ENCODE measurements at regions of chr10 and their contacts with region 1.

Region 1: GRCh38 chr10:21495752-21496342 is 29.6 kb downstream of the SKIDA1 start:
- DNase-seq: peak; percentile 86 to 95 (median 90)
- H3K4me3 ChIP-seq: peak overlapping the region; percentile 66
- H3K27ac ChIP-seq: peak overlapping the region; percentile 15 to 70
- H3K4me1 ChIP-seq: no peaks in the 10 kb centered on the region
- H3K27me3 ChIP-seq: no peaks in the 10 kb centered on the region
- CTCF ChIP-seq: peak; percentile 96 to 98 (median 96)
- EP300 ChIP-seq: no peak
- POLR2A ChIP-seq: peak; percentile 27

Region 2: DNA sequence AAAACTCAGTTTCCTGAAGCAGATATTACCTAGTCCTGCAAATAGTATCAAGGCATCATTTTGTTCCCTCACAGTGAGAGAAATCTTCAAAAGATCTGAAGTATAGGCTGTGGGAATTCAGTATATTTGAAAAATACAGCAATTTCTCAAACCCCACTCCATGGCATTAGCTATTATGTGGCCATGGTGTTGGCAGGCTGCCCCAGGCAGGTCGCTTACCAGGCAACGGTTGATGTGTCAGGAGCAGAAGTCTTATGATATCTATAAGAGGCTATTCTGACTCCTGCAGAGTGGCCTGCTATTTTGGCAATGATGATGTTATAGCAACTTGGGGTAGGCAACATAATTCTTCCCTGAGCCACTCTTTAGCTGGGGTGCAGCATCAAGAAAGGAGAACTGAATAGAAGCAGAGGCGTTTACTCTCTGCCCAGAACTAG is 1491.7 kb before region 1 on chr10:
- intact Hi-C with region 1: loop called in 1 of 4 experiments (anchors 10 kb)
- DNase-seq: peak in 3 of 5 donors; percentile 26 to 44 (median 27)
- H3K4me3 ChIP-seq: no peak overlapping the region
- H3K27ac ChIP-seq: no peak overlapping the region
- H3K4me1 ChIP-seq: peaks cover 16% of the 10 kb centered on the region
- H3K27me3 ChIP-seq: no peaks in the 10 kb centered on the region
- CTCF ChIP-seq: no peak
- EP300 ChIP-seq: no peak
- POLR2A ChIP-seq: no peak

Region 3: DNA sequence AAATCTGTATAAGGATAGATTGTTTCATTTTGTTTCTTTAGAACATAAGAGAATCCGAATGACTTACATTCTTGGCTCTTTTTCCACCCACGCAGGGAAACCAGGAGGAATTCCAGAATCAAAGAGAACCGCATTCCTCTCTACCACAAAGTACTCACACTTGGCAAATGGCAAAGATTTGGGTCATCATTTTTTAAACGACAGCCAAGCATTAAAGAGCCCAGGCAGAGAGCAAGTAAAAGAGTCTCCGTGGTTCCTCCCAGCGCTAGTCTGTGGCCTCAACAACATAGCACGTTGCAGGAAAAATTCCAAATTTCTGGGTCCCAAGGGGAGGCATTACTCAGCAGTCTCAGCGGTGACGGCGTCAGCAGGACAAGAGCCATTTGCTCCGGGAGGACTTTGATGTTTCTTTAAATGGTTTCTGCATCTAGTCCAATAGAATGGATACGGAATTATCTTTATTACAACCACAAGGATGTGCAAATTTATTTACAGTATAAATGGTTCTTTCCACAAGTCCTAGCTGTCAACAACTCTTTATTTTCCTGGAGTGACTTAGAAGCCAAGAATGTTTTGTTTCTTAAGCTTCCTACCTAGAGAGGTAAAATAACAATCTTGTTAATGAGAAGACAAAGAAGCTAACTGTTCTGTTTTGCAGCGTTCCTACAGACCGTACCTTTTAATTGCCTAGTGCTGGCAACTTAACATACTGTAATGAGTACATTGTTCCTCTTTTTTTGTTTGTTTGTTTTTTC is 202.9 kb before region 1 on chr10:
- intact Hi-C with region 1: loop called in 1 of 4 experiments (anchors 5 kb)
- DNase-seq: peak; percentile 54 to 69 (median 63)
- H3K4me3 ChIP-seq: no peak overlapping the region
- H3K27ac ChIP-seq: no peak overlapping the region
- H3K4me1 ChIP-seq: peaks cover 6% of the 10 kb centered on the region
- H3K27me3 ChIP-seq: no peaks in the 10 kb centered on the region
- CTCF ChIP-seq: no peak
- EP300 ChIP-seq: no peak
- POLR2A ChIP-seq: no peak

Region 4: DNA sequence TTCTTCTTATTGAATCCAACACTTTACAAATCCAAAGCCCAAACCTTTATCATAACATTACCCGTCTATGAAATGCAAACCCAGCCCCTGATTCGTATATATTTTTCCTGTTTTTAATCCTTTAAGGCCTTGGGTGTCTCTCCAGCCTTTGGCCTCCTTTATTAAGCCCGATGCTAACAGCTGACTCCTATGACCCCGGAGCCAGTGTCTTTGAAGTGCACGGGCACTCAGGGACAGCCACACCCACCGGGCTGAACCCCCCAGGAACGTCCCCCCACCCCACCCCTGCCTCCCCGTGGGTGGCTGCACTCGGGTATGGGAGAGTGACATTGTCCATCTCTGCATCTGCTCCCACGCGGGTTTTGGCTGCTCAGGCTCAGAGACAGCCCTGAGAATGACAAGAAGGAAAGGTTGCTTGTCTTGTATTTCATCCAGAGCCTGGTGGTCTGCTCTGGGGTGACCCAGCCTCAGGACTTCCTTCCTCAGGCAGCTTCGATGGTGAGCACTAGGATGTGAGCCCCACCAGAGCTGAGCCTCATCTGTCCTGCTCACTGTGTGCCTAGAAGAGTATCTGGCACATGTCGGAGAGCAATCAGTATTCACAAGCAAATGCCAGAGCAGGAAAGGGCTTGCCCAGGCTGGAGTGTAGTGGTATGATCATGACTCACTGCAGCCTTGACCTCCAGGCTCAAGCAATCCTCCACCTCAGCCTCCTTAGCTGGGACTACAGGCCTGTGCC is 180.8 kb before region 1 on chr10:
- intact Hi-C with region 1: no loop called
- DNase-seq: peak in 4 of 5 donors; percentile 44 to 62 (median 44)
- H3K4me3 ChIP-seq: no peak overlapping the region
- H3K27ac ChIP-seq: peak overlapping the region; percentile 9 to 62
- H3K4me1 ChIP-seq: peaks cover 23% of the 10 kb centered on the region
- H3K27me3 ChIP-seq: no peaks in the 10 kb centered on the region
- CTCF ChIP-seq: no peak
- EP300 ChIP-seq: no peak
- POLR2A ChIP-seq: no peak

Region 5: GRCh38 chr10:21524526-21525366 is 28.9 kb after region 1 on chr10:
- intact Hi-C with region 1: no loop called
- DNase-seq: peak in 1 of 5 donors; percentile 55
- H3K4me3 ChIP-seq: peak overlapping the region; percentile 58
- H3K27ac ChIP-seq: peak overlapping the region; percentile 99 to 100
- H3K4me1 ChIP-seq: peaks cover 4% of the 10 kb centered on the region
- H3K27me3 ChIP-seq: no peaks in the 10 kb centered on the region
- CTCF ChIP-seq: no peak
- EP300 ChIP-seq: no peak
- POLR2A ChIP-seq: no peak

Region 6: GRCh38 chr10:21626457-21627161 is 130.8 kb after region 1 on chr10:
- intact Hi-C with region 1: no loop called
- DNase-seq: peak in 3 of 5 donors; percentile 21 to 59 (median 34)
- H3K4me3 ChIP-seq: no peak overlapping the region
- H3K27ac ChIP-seq: no peak overlapping the region
- H3K4me1 ChIP-seq: peaks cover 6% of the 10 kb centered on the region
- H3K27me3 ChIP-seq: no peaks in the 10 kb centered on the region
- CTCF ChIP-seq: no peak
- EP300 ChIP-seq: no peak
- POLR2A ChIP-seq: no peak

Region 7: DNA sequence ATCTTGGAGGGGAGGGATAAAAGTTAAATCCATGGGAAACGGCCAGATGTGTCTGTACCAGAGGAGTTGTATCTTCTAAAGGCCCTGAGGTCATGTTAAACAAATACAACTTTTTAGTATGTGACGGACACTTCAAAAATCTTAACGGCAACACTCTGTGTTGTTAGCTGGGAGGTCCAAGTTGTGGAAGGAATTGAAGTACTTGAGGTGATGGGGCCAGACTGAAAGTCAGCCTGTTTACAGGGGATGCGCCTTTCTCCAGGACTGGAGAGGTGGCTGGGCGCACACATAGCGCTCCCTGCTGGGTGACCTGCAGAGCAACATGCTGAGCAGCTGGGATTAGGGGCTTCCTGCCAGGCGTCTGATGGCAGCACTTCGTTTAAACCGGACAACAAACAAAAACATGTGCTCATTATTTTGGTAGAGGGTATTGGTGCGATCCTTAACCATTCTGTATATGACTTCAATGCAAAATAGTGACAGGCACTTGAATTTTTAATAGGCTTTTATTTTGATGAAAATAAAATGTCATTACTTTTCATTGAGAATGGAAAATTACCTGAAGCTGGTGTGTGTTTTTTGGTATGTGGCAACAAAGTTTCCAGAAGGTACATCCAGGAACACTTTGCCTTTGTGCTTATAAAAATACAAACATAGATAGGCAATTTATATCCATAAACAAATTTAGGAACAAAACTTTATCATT is 236.4 kb after region 1 on chr10:
- intact Hi-C with region 1: loop called (anchors 5 kb)
- DNase-seq: peak; percentile 73 to 83 (median 80)
- H3K4me3 ChIP-seq: no peak overlapping the region
- H3K27ac ChIP-seq: no peak overlapping the region
- H3K4me1 ChIP-seq: no peaks in the 10 kb centered on the region
- H3K27me3 ChIP-seq: no peaks in the 10 kb centered on the region
- CTCF ChIP-seq: peak; percentile 59 to 84 (median 82)
- EP300 ChIP-seq: no peak
- POLR2A ChIP-seq: no peak

Region 8: DNA sequence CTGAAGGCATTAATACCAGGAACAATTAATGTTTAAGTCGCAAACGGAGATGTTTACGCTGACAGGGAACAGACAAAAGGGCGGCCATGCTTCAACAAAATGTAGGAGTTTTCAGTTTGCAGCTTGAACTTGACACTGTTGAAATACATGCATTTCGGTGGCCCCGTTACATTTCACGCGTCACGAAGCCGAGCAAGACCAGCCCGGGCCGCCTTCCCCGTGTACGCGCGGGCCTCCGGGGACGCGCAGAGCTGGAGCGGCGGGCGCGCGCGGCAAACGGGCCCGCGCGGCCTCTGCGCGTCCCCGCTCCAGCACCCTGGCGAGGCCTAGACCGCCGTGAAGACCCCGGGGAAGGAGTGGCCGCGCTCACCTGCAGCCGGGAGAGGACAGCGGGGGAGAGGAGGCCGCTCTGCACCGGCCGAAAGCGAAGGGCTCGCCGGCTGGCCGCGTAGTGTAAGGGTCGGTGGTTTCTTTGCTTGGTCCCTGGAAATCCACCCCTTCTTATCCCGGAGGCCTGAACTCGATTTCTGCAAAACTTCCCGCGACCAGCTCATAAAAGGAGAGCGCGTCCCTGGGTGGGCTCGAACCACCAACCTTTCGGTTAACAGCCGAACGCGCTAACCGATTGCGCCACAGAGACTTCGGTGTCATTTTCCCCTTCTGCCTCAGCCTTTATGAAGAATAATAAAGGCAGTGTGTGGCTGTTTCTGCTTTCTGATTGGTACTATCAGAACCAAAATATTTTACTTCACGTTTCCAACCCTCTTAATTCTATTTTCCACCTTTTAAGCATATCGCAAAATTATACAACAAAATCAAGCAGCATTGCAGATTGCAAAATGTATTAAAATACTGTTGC is 733.3 kb after region 1 on chr10:
- intact Hi-C with region 1: loop called in 1 of 4 experiments (anchors 10 kb)
- DNase-seq: peak; percentile 86 to 93 (median 92)
- H3K4me3 ChIP-seq: peak overlapping the region; percentile 58
- H3K27ac ChIP-seq: peak overlapping the region; percentile 86 to 97
- H3K4me1 ChIP-seq: no peaks in the 10 kb centered on the region
- H3K27me3 ChIP-seq: no peaks in the 10 kb centered on the region
- CTCF ChIP-seq: peak in 1 of 3 donors; percentile 3
- EP300 ChIP-seq: no peak
- POLR2A ChIP-seq: no peak

Measured in ovary (tissue), 10 donors.